Caco-2 (cell line): ENCODE measurements at regions of chr13 and their contacts with region 1.

Region 1: GRCh38 chr13:50081679-50082425 is 66.6 kb downstream of the KCNRG start:
- DNase-seq: peak; percentile 99
- H3K4me3 ChIP-seq: peak overlapping the region; percentile 47
- H3K4me3 Mint-ChIP-seq: peak overlapping the region; percentile 87
- H3K27ac Mint-ChIP-seq: peak overlapping the region; percentile 96
- H3K4me1 ChIP-seq: peaks cover 10% of the 10 kb centered on the region; the same call in 1 of the 2 replicates
- H3K4me1 Mint-ChIP-seq: no peaks in the 10 kb centered on the region
- H3K27me3 ChIP-seq: no peaks in the 10 kb centered on the region
- H3K27me3 Mint-ChIP-seq: no peaks in the 10 kb centered on the region
- CTCF ChIP-seq: peak; percentile 15 to 29

Region 2: DNA sequence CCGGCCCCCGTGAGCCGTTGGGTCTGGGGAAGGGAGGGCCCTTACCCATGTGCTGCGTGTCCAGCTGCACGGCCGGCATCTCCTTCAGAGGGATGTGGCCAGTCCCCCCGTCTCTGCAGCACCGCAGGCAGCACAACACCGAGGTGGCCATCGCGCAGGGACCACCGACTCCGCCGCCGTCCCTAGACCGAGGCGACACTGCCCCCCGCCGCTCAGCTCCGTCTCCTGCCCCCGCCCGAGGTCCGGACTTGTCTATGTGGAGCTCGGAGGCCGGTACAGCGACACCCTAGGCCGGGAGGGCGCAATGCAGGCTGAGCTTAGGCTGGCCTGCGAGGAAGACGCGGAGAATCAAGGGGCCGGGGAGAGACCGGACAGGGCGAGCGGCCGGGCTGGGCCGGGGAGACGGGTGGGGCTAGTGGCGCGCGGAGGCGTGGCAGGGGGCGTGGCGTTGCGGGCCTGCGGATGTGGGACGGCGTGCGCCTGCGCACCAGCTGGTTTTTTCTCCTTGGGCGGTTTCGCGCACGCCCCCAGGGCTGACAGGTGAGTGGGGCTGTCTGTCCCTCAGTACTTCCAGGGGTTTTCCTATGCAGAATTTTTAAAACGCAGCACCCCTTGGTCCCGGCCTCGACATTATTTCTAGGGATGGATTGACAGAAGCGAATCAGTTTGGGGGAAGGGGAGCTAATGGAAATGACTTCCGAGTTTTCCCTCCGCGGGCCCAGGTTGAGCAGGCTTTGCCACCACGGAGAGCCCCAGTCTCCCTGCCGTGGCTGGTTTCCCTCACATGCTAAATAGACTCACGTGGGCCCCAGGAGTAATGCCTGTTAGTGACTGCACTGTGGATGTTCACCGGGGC is 145.5 kb before region 1 on chr13 and contains the start of gene SPRYD7:
- CTCF ChIA-PET with region 1: interaction called, 4 read pairs
- POLR2A ChIA-PET with region 1: interaction called, 10 read pairs
- intact Hi-C with region 1: loop called (anchors 2 kb)
- DNase-seq: peak; percentile 99 to 100
- H3K4me3 ChIP-seq: peak within 1 kb of the TSS; percentile 97
- H3K4me3 Mint-ChIP-seq: peak within 1 kb of the TSS; percentile 100
- H3K27ac Mint-ChIP-seq: peak within 1 kb of the TSS; percentile 98
- H3K4me1 ChIP-seq: peaks cover 43% of the 10 kb centered on the region
- H3K4me1 Mint-ChIP-seq: peaks cover 32% of the 10 kb centered on the region
- H3K27me3 ChIP-seq: no peaks in the 10 kb centered on the region
- H3K27me3 Mint-ChIP-seq: no peaks in the 10 kb centered on the region
- CTCF ChIP-seq: peak; percentile 97 to 99
- total RNA-seq, gene SPRYD7: 16.7 and 20.7 TPM in 2 replicates

Region 3: GRCh38 chr13:49996951-49997895 is 84.6 kb before region 1 on chr13 and contains the start of gene TRIM13:
- CTCF ChIA-PET with region 1: interaction called, 11 read pairs
- POLR2A ChIA-PET with region 1: interaction called, 8 read pairs
- intact Hi-C with region 1: loop called (anchors 2 kb)
- DNase-seq: peak; percentile 91
- H3K4me3 ChIP-seq: peak within 1 kb of the TSS; percentile 77
- H3K4me3 Mint-ChIP-seq: peak within 1 kb of the TSS; percentile 92
- H3K27ac Mint-ChIP-seq: peak within 1 kb of the TSS; percentile 91
- H3K4me1 ChIP-seq: peaks cover 29% of the 10 kb centered on the region
- H3K4me1 Mint-ChIP-seq: peaks cover 9% of the 10 kb centered on the region
- H3K27me3 ChIP-seq: no peaks in the 10 kb centered on the region
- H3K27me3 Mint-ChIP-seq: no peaks in the 10 kb centered on the region
- CTCF ChIP-seq: peak; percentile 79 to 93
- total RNA-seq, gene TRIM13: 16.5 and 21.0 TPM in 2 replicates

Region 4: GRCh38 chr13:50104493-50104892 is 22.6 kb after region 1 on chr13:
- CTCF ChIA-PET with region 1: no interaction called
- POLR2A ChIA-PET with region 1: no interaction called
- intact Hi-C with region 1: no loop called
- DNase-seq: no peak
- H3K4me3 ChIP-seq: no peak overlapping the region
- H3K4me3 Mint-ChIP-seq: no peak overlapping the region
- H3K27ac Mint-ChIP-seq: no peak overlapping the region
- H3K4me1 ChIP-seq: peaks cover 4% of the 10 kb centered on the region; the same call in 1 of the 2 replicates
- H3K4me1 Mint-ChIP-seq: peaks cover 13% of the 10 kb centered on the region
- H3K27me3 ChIP-seq: no peaks in the 10 kb centered on the region
- H3K27me3 Mint-ChIP-seq: no peaks in the 10 kb centered on the region
- CTCF ChIP-seq: no peak

Region 5: GRCh38 chr13:50170447-50171037 is 88.7 kb after region 1 on chr13:
- CTCF ChIA-PET with region 1: no interaction called
- POLR2A ChIA-PET with region 1: no interaction called
- intact Hi-C with region 1: loop called (anchors 10 kb)
- DNase-seq: no peak
- H3K4me3 ChIP-seq: no peak overlapping the region
- H3K4me3 Mint-ChIP-seq: no peak overlapping the region
- H3K27ac Mint-ChIP-seq: no peak overlapping the region
- H3K4me1 ChIP-seq: no peaks in the 10 kb centered on the region
- H3K4me1 Mint-ChIP-seq: no peaks in the 10 kb centered on the region
- H3K27me3 ChIP-seq: no peaks in the 10 kb centered on the region
- H3K27me3 Mint-ChIP-seq: no peaks in the 10 kb centered on the region
- CTCF ChIP-seq: peak in 1 of 2 experiments; percentile 39

Region 6: DNA sequence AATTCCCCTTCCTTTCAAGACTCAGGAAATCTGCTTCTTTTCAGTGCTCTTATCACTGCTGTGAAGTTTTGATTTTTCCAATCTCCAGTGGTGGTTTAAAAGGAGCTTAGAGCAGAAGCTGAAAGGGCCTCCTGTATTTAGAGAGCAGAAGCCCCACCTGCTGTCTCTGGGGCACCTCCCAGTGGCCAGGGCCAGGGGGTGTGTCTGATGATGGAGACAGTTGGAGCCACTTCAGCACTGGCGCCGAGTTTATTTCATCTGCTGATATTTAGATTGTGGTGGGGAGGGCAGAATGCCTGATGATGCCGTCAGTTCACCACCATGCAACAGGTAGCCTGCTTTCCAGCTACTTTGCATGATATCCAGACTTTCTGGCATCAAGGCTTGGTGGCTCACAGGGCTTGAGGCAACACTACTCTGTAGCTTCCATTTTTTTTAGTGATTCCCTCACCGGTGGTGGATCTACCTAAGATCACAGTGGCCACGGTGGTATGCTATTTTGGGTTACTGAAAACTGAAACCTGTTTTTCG is 305.3 kb after region 1 on chr13:
- CTCF ChIA-PET with region 1: interaction called, 8 read pairs
- POLR2A ChIA-PET with region 1: no interaction called
- intact Hi-C with region 1: loop called (anchors 1 kb)
- DNase-seq: peak; percentile 53 to 62
- H3K4me3 ChIP-seq: no peak overlapping the region
- H3K4me3 Mint-ChIP-seq: no peak overlapping the region
- H3K27ac Mint-ChIP-seq: no peak overlapping the region
- H3K4me1 ChIP-seq: no peaks in the 10 kb centered on the region
- H3K4me1 Mint-ChIP-seq: peaks cover 9% of the 10 kb centered on the region
- H3K27me3 ChIP-seq: no peaks in the 10 kb centered on the region
- H3K27me3 Mint-ChIP-seq: no peaks in the 10 kb centered on the region
- CTCF ChIP-seq: peak in 1 of 2 experiments; percentile 71

Region 7: DNA sequence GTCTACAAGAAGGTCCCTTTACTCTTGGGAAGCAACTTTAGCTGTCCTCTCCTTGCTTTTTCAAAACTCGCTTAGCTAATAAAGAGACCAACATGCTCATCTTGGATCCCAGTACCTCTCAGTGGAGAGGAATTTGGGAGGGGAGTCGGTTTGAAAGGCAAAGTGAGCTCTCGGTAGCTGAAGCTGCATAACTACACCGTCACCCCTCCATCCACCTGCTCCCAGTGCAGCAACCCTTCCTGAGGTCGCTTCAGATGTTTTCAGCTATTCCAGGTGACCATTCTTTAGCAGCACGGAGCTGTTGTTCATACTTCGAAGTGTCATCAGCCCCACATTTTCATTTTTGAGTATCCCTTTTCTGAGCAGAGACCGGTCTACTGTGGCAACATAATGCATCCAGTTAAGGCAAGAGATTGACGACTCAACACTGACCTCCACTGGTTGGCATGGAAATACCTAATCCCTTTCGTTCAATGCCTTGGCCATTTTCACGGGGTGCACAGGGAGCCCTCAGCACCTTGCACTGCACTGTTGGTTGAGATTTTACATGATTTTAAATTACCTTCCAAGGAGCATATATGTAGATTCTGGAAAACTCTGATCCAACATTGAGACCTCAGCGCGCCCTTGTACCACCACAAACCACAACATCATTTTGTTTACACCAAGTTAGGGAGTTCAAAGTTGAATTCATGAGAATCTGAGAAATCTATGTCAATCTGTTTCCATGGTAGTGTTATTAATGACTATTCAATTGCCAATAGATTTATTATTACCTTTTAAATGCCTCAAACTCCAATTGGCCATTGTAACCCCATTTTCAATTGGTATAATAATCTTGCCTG is 719.5 kb after region 1 on chr13:
- CTCF ChIA-PET with region 1: no interaction called
- POLR2A ChIA-PET with region 1: no interaction called
- intact Hi-C with region 1: loop called (anchors 1 kb)
- DNase-seq: peak; percentile 55 to 76
- H3K4me3 ChIP-seq: no peak overlapping the region
- H3K4me3 Mint-ChIP-seq: no peak overlapping the region
- H3K27ac Mint-ChIP-seq: no peak overlapping the region
- H3K4me1 ChIP-seq: no peaks in the 10 kb centered on the region
- H3K4me1 Mint-ChIP-seq: no peaks in the 10 kb centered on the region
- H3K27me3 ChIP-seq: no peaks in the 10 kb centered on the region
- H3K27me3 Mint-ChIP-seq: no peaks in the 10 kb centered on the region
- CTCF ChIP-seq: peak; percentile 74 to 82

Region 8: DNA sequence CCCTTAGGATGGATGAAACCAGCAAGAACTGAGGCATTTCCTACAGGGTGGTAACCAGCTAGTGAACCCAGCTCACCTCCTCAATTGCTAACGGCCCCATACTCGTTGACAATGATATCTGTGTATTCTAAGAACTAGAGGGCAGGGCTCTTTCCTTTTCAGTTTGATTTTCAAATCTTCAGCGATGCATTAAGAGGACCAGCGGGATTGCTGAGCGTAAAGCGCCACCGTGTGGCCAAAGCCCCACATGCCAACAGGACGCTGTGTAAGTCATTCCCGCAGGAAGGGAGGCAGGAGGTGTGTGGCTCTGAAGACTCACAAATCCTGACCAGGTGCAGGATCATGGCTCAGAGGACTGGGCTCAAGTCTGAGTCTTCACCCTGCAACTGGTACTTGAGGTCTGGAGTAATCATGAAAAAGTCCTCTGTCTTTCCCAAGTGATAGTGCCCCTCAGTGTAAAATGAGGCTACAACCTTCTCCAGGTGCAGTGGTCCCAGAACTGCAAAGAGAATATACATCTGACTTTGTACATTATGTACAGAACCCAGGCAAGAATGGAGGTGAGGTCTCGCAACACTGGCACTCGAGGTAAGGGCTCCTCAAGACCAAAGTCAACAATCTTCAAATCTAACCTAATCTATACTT is 988.3 kb after region 1 on chr13:
- CTCF ChIA-PET with region 1: no interaction called
- POLR2A ChIA-PET with region 1: no interaction called
- intact Hi-C with region 1: loop called (anchors 5 kb)
- DNase-seq: peak; percentile 78 to 86
- H3K4me3 ChIP-seq: no peak overlapping the region
- H3K4me3 Mint-ChIP-seq: no peak overlapping the region
- H3K27ac Mint-ChIP-seq: no peak overlapping the region
- H3K4me1 ChIP-seq: no peaks in the 10 kb centered on the region
- H3K4me1 Mint-ChIP-seq: no peaks in the 10 kb centered on the region
- H3K27me3 ChIP-seq: no peaks in the 10 kb centered on the region
- H3K27me3 Mint-ChIP-seq: no peaks in the 10 kb centered on the region
- CTCF ChIP-seq: peak; percentile 93 to 95